ENCODE measurements at regions of chr17 and their contacts with region 1.

Region 1: DNA sequence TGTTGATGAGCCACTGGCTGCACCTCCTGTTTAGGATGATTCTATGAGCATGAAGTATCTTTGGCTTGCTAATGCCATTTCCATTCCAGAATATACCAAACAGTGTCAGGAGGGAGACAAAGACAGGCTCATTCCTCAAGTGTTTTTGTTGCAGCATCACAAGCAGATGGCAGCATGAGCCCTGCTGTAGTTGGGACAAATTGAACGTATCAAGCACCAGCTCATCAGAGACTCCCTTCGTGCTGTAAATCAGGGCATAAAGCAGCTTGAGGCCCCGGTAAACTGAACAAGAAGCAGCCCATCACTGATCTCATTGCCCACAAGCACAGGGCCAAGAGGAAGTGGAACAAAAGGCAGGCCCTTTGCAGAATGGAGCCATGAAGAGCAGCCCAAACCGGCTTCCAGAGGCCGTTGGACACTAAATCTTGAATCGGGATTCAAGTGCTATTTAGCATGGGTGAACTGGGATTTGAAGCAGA is 45.9 kb upstream of the HS3ST3A1 start:
- DNase-seq: no peak
- H3K4me3 ChIP-seq: no peak overlapping the region
- H3K27ac ChIP-seq: no peak overlapping the region
- H3K4me1 ChIP-seq: no peaks in the 10 kb centered on the region
- H3K27me3 ChIP-seq: no peaks in the 10 kb centered on the region
- CTCF ChIP-seq: no peak
- EP300 ChIP-seq: no peak
- POLR2A ChIP-seq: no peak

Region 2: DNA sequence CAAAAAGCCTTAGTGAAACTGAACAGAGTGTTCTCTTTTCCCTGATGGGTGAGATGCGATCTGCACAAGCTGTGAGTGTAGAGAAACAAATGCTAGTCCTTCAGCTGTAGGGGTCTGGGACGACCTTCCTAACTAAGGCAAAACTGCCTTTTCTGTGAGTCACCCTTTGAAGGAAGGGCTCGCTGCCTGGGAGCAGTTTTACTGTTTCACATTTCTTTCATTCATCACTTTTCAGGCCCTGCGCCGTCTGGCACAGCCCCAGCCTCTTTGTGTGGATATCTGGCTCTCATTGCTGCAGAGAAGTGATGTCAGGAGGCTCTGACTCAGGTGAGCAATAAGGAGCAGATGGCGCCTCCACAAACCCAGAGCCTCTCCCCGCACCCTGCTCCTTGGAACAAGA is 103.3 kb before region 1 on chr17:
- in situ Hi-C with region 1: loop called in 1 of 4 experiments (anchors 25 kb)
- intact Hi-C with region 1: no loop called
- DNase-seq: peak; percentile 13
- H3K4me3 ChIP-seq: no peak overlapping the region
- H3K27ac ChIP-seq: no peak overlapping the region
- H3K4me1 ChIP-seq: no peaks in the 10 kb centered on the region
- H3K27me3 ChIP-seq: no peaks in the 10 kb centered on the region
- CTCF ChIP-seq: no peak
- EP300 ChIP-seq: no peak
- POLR2A ChIP-seq: no peak

Region 3: GRCh38 chr17:14061666-14062560 is 414.3 kb after region 1 on chr17:
- in situ Hi-C with region 1: no loop called
- intact Hi-C with region 1: no loop called
- DNase-seq: no peak
- H3K4me3 ChIP-seq: no peak overlapping the region
- H3K27ac ChIP-seq: no peak overlapping the region
- H3K4me1 ChIP-seq: no peaks in the 10 kb centered on the region
- H3K27me3 ChIP-seq: no peaks in the 10 kb centered on the region
- CTCF ChIP-seq: no peak
- EP300 ChIP-seq: no peak
- POLR2A ChIP-seq: no peak